ENCODE measurements at regions of chr7 and their contacts with region 1.

Region 1: DNA sequence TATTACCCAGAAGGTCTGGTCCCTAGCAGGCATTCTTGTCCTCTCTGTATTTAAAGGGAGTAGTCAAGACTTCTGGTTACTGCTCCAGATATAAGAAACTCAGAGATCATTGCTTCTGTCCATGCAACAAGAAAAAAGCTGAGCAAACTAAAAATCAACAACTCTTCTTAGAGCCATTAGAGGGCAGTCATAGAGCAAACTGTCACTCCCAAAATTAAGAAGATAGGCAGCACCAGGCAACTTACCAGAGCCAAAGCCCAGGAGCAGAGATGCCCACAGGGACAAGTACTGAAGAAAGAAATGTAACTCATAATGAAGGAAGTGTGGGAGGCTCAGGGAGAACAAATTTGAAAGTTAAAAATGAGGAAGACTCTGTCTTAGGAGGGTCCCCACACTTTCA is 472.9 kb upstream of the COBL start:
- DNase-seq: no peak
- H3K4me3 ChIP-seq: no peak overlapping the region
- H3K4me3 Mint-ChIP-seq: no peak overlapping the region
- H3K27ac Mint-ChIP-seq: peak overlapping the region; percentile 39
- H3K4me1 ChIP-seq: no peaks in the 10 kb centered on the region
- H3K4me1 Mint-ChIP-seq: no peaks in the 10 kb centered on the region
- H3K27me3 ChIP-seq: no peaks in the 10 kb centered on the region
- H3K27me3 Mint-ChIP-seq: no peaks in the 10 kb centered on the region
- CTCF ChIP-seq: peak; percentile 44 to 53

Region 2: DNA sequence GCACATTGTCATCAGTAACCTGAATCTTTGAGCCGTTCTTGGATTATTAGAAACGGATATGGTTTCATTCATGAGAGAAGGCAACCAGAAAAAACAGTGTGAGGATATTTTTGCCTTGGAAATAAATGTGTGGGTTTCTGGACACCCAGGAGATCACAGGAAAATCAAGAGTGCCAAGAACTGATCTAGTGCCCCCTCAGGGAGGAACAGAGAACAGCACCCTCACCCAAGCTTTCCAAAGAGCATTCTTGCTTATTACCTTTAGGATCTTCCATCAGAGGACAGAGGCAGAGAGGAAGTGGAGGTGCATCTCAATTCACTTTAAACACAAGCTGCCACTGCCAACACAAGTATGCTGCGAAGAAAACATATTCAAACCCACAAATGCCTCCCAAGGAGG is 378.6 kb after region 1 on chr7:
- CTCF ChIA-PET with region 1: no interaction called
- POLR2A ChIA-PET with region 1: no interaction called
- intact Hi-C with region 1: loop called (anchors 1 kb)
- DNase-seq: peak in 1 of 2 experiments; percentile 45
- H3K4me3 ChIP-seq: no peak overlapping the region
- H3K4me3 Mint-ChIP-seq: no peak overlapping the region
- H3K27ac Mint-ChIP-seq: no peak overlapping the region
- H3K4me1 ChIP-seq: no peaks in the 10 kb centered on the region
- H3K4me1 Mint-ChIP-seq: no peaks in the 10 kb centered on the region
- H3K27me3 ChIP-seq: no peaks in the 10 kb centered on the region
- H3K27me3 Mint-ChIP-seq: no peaks in the 10 kb centered on the region
- CTCF ChIP-seq: peak; percentile 38 to 42

Measured in Caco-2 (cell line).